ENCODE measurements at regions of chr12 and their contacts with region 1.

Region 1: DNA sequence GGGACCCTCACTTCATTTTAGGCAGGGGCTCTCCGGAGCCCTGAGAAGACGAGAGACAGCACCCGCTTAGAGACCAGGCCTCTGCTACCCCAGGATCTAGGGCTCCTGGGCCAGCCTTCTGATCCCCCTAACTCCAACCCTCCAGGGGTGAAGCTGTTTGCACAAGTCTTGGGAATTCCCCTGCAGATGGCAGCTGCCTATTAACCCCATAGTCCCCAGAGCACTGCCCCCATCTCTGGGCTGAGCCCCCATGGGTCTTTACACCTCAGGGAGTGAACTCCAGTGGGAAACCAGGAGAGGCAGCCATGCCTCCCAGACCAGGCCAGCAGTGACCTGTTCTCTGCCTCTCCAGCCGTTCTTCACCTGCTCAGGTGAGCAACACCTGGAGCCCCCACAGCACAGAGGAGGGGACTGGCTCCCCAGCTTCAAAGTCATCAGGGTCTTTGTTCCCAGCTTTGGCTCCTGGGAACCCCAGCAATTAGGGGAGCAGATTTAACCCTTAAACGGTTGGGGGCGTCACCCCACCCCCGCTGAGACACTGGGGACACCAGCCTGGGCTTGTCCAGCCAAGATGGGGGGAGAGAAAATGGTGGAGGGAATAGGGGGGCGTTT is 2.3 kb downstream of the WNT10B start:
- DNase-seq: no peak
- H3K4me3 ChIP-seq: no peak overlapping the region
- H3K27ac ChIP-seq: no peak overlapping the region
- H3K4me1 ChIP-seq: no peaks in the 10 kb centered on the region
- CTCF ChIP-seq: no peak

Region 2: DNA sequence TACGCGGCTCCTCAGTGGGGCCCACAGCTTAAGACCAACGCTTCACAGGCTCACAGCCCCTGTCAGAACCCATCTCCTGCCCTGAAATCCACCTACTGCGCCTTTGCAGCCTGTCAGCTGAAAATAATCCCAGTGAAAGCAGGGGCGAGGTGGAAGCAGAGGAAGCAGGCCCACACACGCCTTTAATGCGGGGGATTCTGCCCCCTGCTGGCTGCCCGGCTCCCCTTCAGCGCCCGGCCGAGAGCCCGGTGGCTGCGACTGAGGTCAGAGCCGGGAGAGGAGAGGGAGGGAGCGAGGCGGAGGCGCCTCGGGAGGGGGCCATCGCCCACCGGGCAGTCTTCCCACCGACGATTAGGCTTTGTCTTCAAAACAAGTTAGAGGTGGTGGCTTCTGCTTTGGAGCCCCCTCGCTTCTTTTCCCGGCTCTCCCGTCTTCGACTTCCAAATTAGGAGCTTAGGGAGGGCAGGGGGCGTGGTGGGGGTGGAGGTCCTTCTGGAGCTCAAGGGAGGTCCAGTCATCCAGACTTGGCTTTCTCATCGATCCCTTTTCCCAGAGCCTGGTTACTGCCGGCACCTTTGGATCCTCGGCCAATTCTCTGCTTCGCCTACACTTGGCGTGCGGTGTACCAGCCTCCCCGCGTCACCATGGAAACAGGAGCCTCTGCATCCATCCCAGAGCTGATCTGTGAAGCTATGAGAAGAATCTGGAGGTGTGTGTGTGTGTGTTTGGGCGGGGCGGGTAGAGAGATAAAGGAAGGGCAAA is 78.4 kb before region 1 on chr12:
- CTCF ChIA-PET with region 1: no interaction called
- POLR2A ChIA-PET with region 1: no interaction called
- intact Hi-C with region 1: no loop called
- DNase-seq: peak; percentile 77
- H3K4me3 ChIP-seq: peak overlapping the region; percentile 30
- H3K27ac ChIP-seq: no peak overlapping the region
- H3K4me1 ChIP-seq: peaks cover 6% of the 10 kb centered on the region
- CTCF ChIP-seq: peak; percentile 95

Region 3: GRCh38 chr12:48957141-48958048 is 11.9 kb before region 1 on chr12 and contains the start of gene ARF3:
- CTCF ChIA-PET with region 1: interaction called, 4 read pairs
- POLR2A ChIA-PET with region 1: interaction called, 12 read pairs
- intact Hi-C with region 1: no loop called
- DNase-seq: peak; percentile 97
- H3K4me3 ChIP-seq: peak within 1 kb of the TSS; percentile 75
- H3K27ac ChIP-seq: peak within 1 kb of the TSS; percentile 61
- H3K4me1 ChIP-seq: peaks cover 31% of the 10 kb centered on the region
- CTCF ChIP-seq: peak; percentile 21; the same call in 1 of the 2 replicates
- total RNA-seq, gene ARF3: 41.2 and 42.9 TPM in 2 replicates

Region 4: DNA sequence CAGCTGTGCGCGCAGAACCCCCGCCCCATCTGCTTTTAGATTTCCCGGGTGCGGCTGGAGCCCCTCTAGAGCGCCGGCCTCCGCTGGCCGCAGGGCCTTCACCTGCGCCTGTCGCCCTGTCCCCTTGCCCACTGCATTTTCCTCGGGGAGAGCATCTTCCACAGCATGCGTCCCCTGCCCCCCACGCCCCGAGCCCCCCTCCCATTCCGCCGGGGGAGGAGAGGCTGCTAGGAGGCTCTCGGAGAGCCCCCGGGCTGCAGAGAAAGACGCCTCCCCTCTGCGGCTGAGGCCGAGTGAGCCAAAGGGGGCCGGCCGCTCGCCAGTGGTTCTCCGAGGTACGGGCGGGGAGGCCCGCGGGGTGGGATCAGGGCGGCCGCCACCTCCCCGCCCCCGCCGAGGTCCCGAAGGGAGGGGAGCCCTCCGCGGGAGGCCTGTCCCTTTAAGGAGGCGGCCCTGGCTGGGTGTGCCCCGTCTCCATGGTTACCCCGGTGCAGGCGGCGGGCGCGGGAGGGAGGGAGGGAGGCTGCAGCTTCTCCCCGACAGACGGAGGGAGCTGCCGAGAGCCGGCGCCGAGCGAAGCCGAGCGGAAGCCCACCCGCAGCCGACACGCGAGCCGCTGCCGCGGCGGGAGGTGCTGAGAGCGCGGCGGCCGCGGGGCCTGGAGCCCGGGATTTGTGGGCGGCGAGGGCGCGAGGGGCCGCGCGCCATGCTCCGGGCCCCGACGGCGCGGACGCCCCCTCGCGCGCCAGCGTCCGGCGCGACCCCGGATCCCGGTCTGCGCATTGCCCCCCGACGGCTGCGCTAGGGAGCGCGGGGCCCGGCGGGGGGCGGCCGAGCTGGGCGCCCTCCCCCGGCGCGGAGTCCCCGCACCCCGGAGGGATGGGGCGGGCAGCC is 569.5 kb after region 1 on chr12 and contains the start of gene KCNH3:
- CTCF ChIA-PET with region 1: no interaction called
- POLR2A ChIA-PET with region 1: no interaction called
- intact Hi-C with region 1: no loop called
- DNase-seq: peak; percentile 89
- H3K4me3 ChIP-seq: peak within 1 kb of the TSS; percentile 64
- H3K27ac ChIP-seq: no peak within 1 kb of the TSS
- H3K4me1 ChIP-seq: peaks cover 35% of the 10 kb centered on the region
- CTCF ChIP-seq: no peak
- total RNA-seq, gene KCNH3: 0.05 and 0.06 TPM in 2 replicates

Measured in OCI-LY7 (cell line).